Activated CD4-positive, alpha-beta memory T cell treated with anti-CD3 and anti-CD28 coated beads for 36 hours (primary cell): ENCODE measurements at regions of chr4 and their contacts with region 1.

Region 1: GRCh38 chr4:183261953-183262775 is 57.9 kb downstream of the CLDN22 start:
- DNase-seq: peak; percentile 86
- H3K4me3 Mint-ChIP-seq: no peak overlapping the region
- H3K27ac Mint-ChIP-seq: peak overlapping the region; percentile 33
- H3K4me1 Mint-ChIP-seq: peaks cover 7% of the 10 kb centered on the region
- H3K27me3 Mint-ChIP-seq: peaks cover 2% of the 10 kb centered on the region

Region 2: GRCh38 chr4:182925298-182925738 is 336.8 kb before region 1 on chr4:
- CTCF ChIA-PET with region 1: interaction called, 10 read pairs
- POLR2A ChIA-PET with region 1: no interaction called
- intact Hi-C with region 1: no loop called
- DNase-seq: peak; percentile 70
- H3K4me3 Mint-ChIP-seq: no peak overlapping the region
- H3K27ac Mint-ChIP-seq: no peak overlapping the region
- H3K4me1 Mint-ChIP-seq: no peaks in the 10 kb centered on the region
- H3K27me3 Mint-ChIP-seq: peaks cover 4% of the 10 kb centered on the region

Region 3: DNA sequence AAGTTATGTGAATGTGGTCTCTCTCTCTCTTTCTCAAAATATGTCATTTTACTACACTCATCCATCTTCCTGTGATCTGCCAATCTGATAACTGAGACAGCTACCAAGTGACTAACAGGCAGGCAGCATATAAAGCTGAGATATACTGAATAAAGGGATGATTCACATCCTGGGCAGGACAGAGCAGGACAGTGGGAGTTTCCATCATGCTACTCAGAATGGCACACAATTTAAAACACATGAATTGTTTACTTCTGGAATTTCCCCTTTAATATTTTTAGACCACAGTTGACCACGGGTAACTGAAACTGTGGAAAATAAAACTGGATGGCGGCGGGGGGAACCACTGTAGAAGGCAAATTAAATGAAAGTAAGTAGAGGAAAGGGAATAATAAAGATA is 286.4 kb before region 1 on chr4:
- CTCF ChIA-PET with region 1: interaction called, 10 read pairs
- POLR2A ChIA-PET with region 1: no interaction called
- intact Hi-C with region 1: no loop called
- DNase-seq: peak; percentile 19
- H3K4me3 Mint-ChIP-seq: no peak overlapping the region
- H3K27ac Mint-ChIP-seq: no peak overlapping the region
- H3K4me1 Mint-ChIP-seq: peaks cover 9% of the 10 kb centered on the region
- H3K27me3 Mint-ChIP-seq: peaks cover 15% of the 10 kb centered on the region

Region 4: GRCh38 chr4:183098723-183099536 is 163.2 kb before region 1 on chr4 and contains the start of gene WWC2:
- CTCF ChIA-PET with region 1: interaction called, 17 read pairs
- POLR2A ChIA-PET with region 1: no interaction called
- intact Hi-C with region 1: no loop called
- DNase-seq: peak; percentile 70
- H3K4me3 Mint-ChIP-seq: peak within 1 kb of the TSS; percentile 57
- H3K27ac Mint-ChIP-seq: no peak within 1 kb of the TSS
- H3K4me1 Mint-ChIP-seq: peaks cover 5% of the 10 kb centered on the region
- H3K27me3 Mint-ChIP-seq: peaks cover 17% of the 10 kb centered on the region
- total RNA-seq, gene WWC2: 3.6 to 5.4 TPM

Region 5: DNA sequence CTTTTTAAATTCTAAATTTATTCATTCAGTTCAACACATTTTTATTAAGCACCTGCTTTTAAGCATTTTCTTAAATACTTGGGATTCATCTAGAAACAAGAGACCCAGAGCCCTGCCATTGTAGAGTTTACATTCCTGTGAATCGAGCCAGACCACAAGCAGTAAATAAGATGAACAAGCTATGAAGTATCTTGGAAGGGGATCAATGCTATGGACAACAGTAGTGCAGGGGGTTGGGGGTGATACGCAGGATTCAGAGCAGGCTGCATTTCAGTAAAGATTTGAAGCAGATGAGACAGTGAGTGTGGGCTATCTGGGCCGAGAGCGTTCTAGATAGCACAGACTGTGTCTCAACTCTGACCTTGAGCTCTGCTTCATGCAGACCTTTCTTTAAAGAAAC is 22.8 kb after region 1 on chr4:
- CTCF ChIA-PET with region 1: interaction called, 10 read pairs
- POLR2A ChIA-PET with region 1: no interaction called
- intact Hi-C with region 1: no loop called
- DNase-seq: no peak
- H3K4me3 Mint-ChIP-seq: no peak overlapping the region
- H3K27ac Mint-ChIP-seq: no peak overlapping the region
- H3K4me1 Mint-ChIP-seq: no peaks in the 10 kb centered on the region
- H3K27me3 Mint-ChIP-seq: no peaks in the 10 kb centered on the region

Region 6: DNA sequence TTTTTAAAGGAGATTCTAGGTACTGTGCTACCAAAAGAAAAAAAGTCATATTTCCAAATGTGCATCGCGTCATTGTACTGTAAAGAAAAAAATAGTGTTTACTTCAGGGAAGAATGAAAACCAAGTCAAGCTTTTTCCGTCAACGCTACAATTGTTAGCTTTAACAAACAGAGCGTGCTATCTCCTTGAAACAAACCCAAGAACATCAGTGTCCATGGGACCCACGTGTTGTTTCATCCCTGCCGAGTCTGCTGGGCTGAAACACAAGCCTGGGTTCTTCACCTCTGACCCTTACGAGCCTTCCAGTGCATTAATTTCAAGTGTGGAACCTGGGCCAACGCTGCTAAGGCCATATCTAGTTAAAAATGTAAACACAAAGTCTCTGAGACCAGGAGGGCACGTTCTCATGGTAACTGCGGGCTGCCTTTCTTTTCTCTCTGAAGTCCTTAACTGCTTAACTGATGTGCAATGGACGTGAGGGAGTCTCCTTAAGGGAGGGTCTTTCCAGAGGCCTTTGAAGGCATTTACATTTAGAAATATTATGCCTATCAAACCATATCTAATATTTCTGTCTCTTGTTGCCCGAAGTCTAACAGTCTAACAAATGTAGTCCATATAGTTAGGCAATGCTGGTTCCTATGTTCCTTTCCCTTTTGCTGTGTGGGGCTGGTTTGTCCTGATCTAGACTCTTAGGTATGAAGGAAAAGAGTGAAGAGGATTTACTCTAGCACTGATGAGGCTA is 279.0 kb after region 1 on chr4:
- CTCF ChIA-PET with region 1: no interaction called
- POLR2A ChIA-PET with region 1: no interaction called
- intact Hi-C with region 1: no loop called
- DNase-seq: no peak
- H3K4me3 Mint-ChIP-seq: no peak overlapping the region
- H3K27ac Mint-ChIP-seq: no peak overlapping the region
- H3K4me1 Mint-ChIP-seq: no peaks in the 10 kb centered on the region
- H3K27me3 Mint-ChIP-seq: peaks cover 25% of the 10 kb centered on the region